ENCODE measurements at regions of chr4 and their contacts with region 1.

Region 1: DNA sequence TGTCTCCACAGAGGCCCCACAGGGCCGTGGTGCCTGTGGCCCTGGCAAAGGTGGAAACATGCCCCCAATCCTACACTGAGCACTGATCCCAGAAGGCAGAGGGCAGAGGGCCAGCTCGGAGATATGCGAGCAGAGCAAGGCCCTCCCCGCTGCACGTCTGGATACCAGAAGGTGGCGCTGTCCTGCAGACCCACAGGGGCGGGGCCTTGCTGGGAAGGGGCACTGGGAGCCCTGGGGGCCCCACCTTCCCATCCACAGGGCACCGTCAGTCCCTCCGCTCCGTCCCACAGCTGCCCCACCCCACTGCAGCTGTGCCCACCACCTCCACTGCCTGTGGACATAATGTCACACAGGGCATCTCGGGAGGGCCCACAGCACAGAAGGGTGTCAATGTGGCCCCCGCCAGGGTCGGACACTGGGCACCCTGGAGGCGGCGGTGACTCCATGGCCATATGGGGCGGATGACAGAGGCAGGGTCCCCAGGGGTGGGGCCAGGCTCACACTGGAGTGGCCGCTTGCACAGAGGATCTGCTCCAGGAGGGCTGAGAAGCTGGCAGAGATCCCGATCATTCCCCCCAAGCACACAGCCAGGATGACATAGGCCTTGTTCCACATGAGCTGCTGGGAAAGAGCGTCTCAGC is 4.8 kb downstream of the SLC49A3 start:
- DNase-seq: peak; percentile 69 to 83 (median 74)
- ATAC-seq: peak; percentile 68
- H3K4me3 ChIP-seq: no peak overlapping the region
- H3K27ac ChIP-seq: no peak overlapping the region
- H3K4me1 ChIP-seq: peaks cover 25 to 94% of the 10 kb centered on the region in 2 experiments
- H3K27me3 ChIP-seq: no peaks in the 10 kb centered on the region
- CTCF ChIP-seq: peak; percentile 82 to 85 (median 84)
- EP300 ChIP-seq: no peak
- POLR2A ChIP-seq: no peak
- RAD21 ChIP-seq: peak; percentile 8 to 66; a peak in 2 of 4 replicates

Region 2: DNA sequence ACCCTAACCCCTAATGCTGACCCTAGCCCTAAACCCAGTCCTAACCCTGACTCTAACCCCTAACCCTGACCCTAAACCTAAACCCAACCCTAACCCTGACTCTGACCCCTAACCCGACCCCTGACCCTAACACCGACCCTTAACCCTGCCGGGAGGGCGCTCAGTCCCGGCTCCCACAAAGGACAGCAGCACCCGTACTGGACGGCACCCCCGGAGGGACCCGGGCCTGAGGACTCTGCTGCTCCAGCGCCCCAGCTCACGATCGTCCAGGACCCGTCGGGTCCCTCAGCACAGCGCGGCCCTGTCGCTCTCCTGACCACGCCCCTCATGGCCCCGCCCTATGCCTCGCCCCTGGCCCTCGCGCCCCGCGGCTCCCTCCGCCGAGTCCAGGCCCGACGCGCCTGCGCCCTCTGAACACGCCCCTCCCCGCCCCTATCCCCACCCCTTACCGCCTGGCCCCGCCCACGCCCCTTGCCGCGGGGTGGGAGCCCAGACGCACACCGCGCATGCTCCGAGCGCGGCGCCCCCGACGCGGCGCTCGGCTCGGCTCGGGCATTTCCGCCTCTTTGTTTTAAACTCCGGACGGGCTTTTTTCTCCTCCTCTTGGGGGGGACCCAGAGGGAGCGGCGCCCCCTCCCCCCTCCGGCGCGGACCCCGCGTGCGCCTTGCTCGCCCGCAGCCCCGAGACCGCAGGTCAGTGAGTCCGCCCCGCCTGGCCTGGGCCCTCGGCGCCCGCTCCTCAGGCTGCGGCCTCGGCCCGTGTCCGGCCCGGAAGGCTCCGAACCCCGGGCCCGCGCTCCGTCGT is 21.4 kb after region 1 on chr4 and contains the start of gene PCGF3:
- CTCF ChIA-PET with region 1: no interaction called
- POLR2A ChIA-PET with region 1: no interaction called
- in situ Hi-C with region 1: no loop called
- intact Hi-C with region 1: loop called (anchors 1 kb)
- DNase-seq: peak; percentile 96 to 100 (median 100)
- ATAC-seq: peak; percentile 97
- H3K4me3 ChIP-seq: peak within 1 kb of the TSS; percentile 77
- H3K27ac ChIP-seq: peak within 1 kb of the TSS; percentile 83
- H3K4me1 ChIP-seq: peaks cover 23 to 69% of the 10 kb centered on the region in 2 experiments; a peak in 4 of 5 replicates
- H3K27me3 ChIP-seq: no peaks in the 10 kb centered on the region
- CTCF ChIP-seq: no peak
- EP300 ChIP-seq: no peak
- POLR2A ChIP-seq: peak; percentile 61
- RAD21 ChIP-seq: 0 out of 4 replicates have a peak, but pooled peaks of 1 of the 2 experiments have one; percentile 6
- polyA plus RNA-seq, gene PCGF3: 2.6 to 4.3 TPM

Region 3: GRCh38 chr4:732911-733630 is 49.0 kb after region 1 on chr4:
- CTCF ChIA-PET with region 1: no interaction called
- POLR2A ChIA-PET with region 1: no interaction called
- in situ Hi-C with region 1: no loop called
- intact Hi-C with region 1: loop called (anchors 10 kb)
- DNase-seq: no peak
- ATAC-seq: no peak
- H3K4me3 ChIP-seq: no peak overlapping the region
- H3K27ac ChIP-seq: no peak overlapping the region
- H3K4me1 ChIP-seq: peaks cover 0 to 37% of the 10 kb centered on the region in 2 experiments; a peak in 3 of 5 replicates
- H3K27me3 ChIP-seq: no peaks in the 10 kb centered on the region
- CTCF ChIP-seq: no peak
- EP300 ChIP-seq: no peak
- POLR2A ChIP-seq: no peak
- RAD21 ChIP-seq: no peak

Region 4: DNA sequence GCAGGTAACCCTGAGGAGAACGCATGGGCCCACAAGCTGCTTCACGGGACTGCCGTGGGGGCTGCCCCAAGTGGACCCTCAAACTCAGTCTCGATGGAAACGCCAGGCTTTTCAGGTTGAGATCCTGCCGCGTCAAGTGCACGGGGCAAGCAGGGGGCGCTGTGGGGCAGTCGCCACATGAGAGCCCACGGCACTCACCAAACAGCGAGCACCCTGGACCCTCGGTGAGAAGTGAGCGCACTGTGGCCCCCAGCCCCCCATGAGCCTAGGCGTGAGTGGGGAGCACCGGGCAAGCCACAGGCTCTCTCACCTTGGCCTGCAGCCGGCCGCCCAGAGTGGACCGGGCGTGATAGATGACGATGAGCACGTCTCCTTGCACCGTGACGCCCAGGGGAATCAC is 192.7 kb after region 1 on chr4:
- CTCF ChIA-PET with region 1: no interaction called
- POLR2A ChIA-PET with region 1: no interaction called
- in situ Hi-C with region 1: no loop called
- intact Hi-C with region 1: no loop called
- DNase-seq: peak in 1 of 4 experiments; percentile 14
- ATAC-seq: peak; percentile 62
- H3K4me3 ChIP-seq: no peak overlapping the region
- H3K27ac ChIP-seq: no peak overlapping the region
- H3K4me1 ChIP-seq: peaks cover 0 to 11% of the 10 kb centered on the region in 2 experiments; a peak in 1 of 5 replicates
- H3K27me3 ChIP-seq: no peaks in the 10 kb centered on the region
- CTCF ChIP-seq: peak; percentile 26 to 42 (median 34); a peak in 4 of 6 replicates
- EP300 ChIP-seq: no peak
- POLR2A ChIP-seq: no peak
- RAD21 ChIP-seq: peak in 1 of 2 experiments; percentile 34; a peak in 2 of 4 replicates

Measured in K562 (cell line).